ENCODE measurements at regions of chr17 and their contacts with region 1.

Region 1: GRCh38 chr17:74659898-74660297 is 36.4 kb upstream of the CD300E start:
- DNase-seq: no peak
- H3K4me3 Mint-ChIP-seq: no peak overlapping the region
- H3K27ac Mint-ChIP-seq: no peak overlapping the region
- H3K4me1 Mint-ChIP-seq: peaks cover 6% of the 10 kb centered on the region
- H3K27me3 Mint-ChIP-seq: peaks cover 80% of the 10 kb centered on the region

Region 2: GRCh38 chr17:74478420-74479100 is 181.3 kb before region 1 on chr17:
- CTCF ChIA-PET with region 1: no interaction called
- DNase-seq: peak; percentile 59
- H3K4me3 Mint-ChIP-seq: peak overlapping the region; percentile 49
- H3K27ac Mint-ChIP-seq: peak overlapping the region; percentile 78
- H3K4me1 Mint-ChIP-seq: peaks cover 61% of the 10 kb centered on the region
- H3K27me3 Mint-ChIP-seq: peaks cover 44% of the 10 kb centered on the region

Region 3: DNA sequence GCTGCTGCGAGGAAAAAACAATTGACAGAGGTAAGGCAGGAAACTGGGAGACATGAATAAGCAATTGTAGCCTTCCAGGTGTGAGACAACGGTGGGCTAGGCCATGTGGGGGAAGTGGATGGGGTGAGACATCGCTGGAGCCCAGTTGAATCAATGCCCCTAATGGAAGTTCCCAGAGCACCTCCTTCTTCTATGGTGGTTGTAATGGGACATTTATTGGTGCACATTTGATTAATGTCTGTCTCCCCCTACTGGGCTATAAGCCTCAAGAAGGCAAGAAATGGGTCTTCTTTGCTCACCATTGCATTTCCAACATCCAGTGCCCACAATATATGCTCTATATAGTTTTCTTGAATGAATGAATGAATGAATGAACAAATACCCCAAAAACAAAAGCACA is 13.7 kb before region 1 on chr17:
- CTCF ChIA-PET with region 1: interaction called, 29 read pairs
- DNase-seq: no peak
- H3K4me3 Mint-ChIP-seq: no peak overlapping the region
- H3K27ac Mint-ChIP-seq: no peak overlapping the region
- H3K4me1 Mint-ChIP-seq: peaks cover 9% of the 10 kb centered on the region
- H3K27me3 Mint-ChIP-seq: peaks cover 94% of the 10 kb centered on the region

Region 4: GRCh38 chr17:74690409-74690825 is 30.5 kb after region 1 on chr17:
- CTCF ChIA-PET with region 1: interaction called, 10 read pairs
- DNase-seq: no peak
- H3K4me3 Mint-ChIP-seq: no peak overlapping the region
- H3K27ac Mint-ChIP-seq: no peak overlapping the region
- H3K4me1 Mint-ChIP-seq: peaks cover 26% of the 10 kb centered on the region
- H3K27me3 Mint-ChIP-seq: peaks cover 58% of the 10 kb centered on the region

Region 5: DNA sequence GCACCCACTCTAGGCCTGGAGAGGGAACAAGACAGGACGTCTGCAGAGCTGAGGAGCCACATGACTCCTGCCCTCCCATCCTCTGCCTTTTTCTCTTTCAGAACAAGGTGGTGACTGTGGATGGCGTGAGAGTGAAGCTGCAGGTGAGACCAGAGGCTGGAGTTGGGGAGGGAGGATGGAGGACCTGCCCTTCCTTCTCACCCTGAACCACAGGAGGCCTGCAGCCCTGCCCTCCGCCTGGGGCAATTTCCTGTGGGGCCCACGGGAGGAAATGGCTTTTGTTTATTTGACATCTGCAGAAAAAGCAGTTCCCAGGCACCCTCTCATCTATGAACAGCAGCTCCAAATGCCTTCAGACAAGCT is 82.2 kb after region 1 on chr17:
- CTCF ChIA-PET with region 1: interaction called, 240 read pairs
- DNase-seq: peak; percentile 85
- H3K4me3 Mint-ChIP-seq: peak overlapping the region; percentile 68
- H3K27ac Mint-ChIP-seq: peak overlapping the region; percentile 98
- H3K4me1 Mint-ChIP-seq: peaks cover 92% of the 10 kb centered on the region
- H3K27me3 Mint-ChIP-seq: no peaks in the 10 kb centered on the region

Region 6: GRCh38 chr17:74759243-74759801 is 99.4 kb after region 1 on chr17:
- CTCF ChIA-PET with region 1: interaction called, 55 read pairs
- DNase-seq: peak; percentile 80
- H3K4me3 Mint-ChIP-seq: peak overlapping the region; percentile 68
- H3K27ac Mint-ChIP-seq: peak overlapping the region; percentile 91
- H3K4me1 Mint-ChIP-seq: peaks cover 72% of the 10 kb centered on the region
- H3K27me3 Mint-ChIP-seq: no peaks in the 10 kb centered on the region

Region 7: GRCh38 chr17:74776044-74776977 is 116.4 kb after region 1 on chr17 and contains the start of gene NAT9:
- CTCF ChIA-PET with region 1: interaction called, 38 read pairs
- DNase-seq: peak; percentile 99
- H3K4me3 Mint-ChIP-seq: peak within 1 kb of the TSS; percentile 98
- H3K27ac Mint-ChIP-seq: peak within 1 kb of the TSS; percentile 94
- H3K4me1 Mint-ChIP-seq: peaks cover 73% of the 10 kb centered on the region
- H3K27me3 Mint-ChIP-seq: peaks cover 4% of the 10 kb centered on the region

Region 8: GRCh38 chr17:74864866-74865395 is 205.0 kb after region 1 on chr17:
- CTCF ChIA-PET with region 1: interaction called, 28 read pairs
- DNase-seq: peak; percentile 80
- H3K4me3 Mint-ChIP-seq: no peak overlapping the region
- H3K27ac Mint-ChIP-seq: no peak overlapping the region
- H3K4me1 Mint-ChIP-seq: peaks cover 23% of the 10 kb centered on the region
- H3K27me3 Mint-ChIP-seq: peaks cover 43% of the 10 kb centered on the region